GM12878 (cell line): ENCODE measurements at regions of chr1 and their contacts with region 1.

Region 1: DNA sequence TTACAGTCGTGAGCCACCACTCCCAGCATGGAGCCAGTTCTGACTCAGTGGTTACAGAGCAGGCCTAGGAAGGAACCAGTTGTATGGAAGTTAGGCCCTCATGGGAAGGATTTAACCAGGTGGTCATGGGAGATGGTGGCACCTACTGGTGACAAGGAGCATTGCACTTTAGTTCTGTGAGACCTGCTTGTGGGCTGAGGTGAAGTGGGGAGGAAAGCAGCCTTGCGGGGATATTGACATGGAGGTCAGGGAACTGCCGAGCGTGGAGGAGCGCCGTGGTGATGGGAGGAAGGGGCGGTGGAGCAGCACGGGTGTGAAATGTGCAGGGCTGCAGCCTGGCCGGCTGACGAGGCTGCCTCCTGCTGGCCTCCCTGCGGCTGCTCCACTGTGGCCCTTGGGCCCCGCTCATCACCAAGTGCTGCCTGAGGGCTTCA is 100.4 kb downstream of the GALNT2 start:
- DNase-seq: peak; percentile 54
- ATAC-seq: peak; percentile 74
- H3K4me3 ChIP-seq: no peak overlapping the region
- H3K27ac ChIP-seq: no peak overlapping the region
- H3K4me1 ChIP-seq: peaks cover 26% of the 10 kb centered on the region
- H3K27me3 ChIP-seq: no peaks in the 10 kb centered on the region
- CTCF ChIP-seq: peak; percentile 67 to 82 (median 79)
- EP300 ChIP-seq: no peak
- POLR2A ChIP-seq: no peak
- RAD21 ChIP-seq: peak; percentile 92

Region 2: GRCh38 chr1:229661022-229661877 is 506.2 kb before region 1 on chr1:
- CTCF ChIA-PET with region 1: interaction called, 20 read pairs
- POLR2A ChIA-PET with region 1: no interaction called
- RAD21 ChIA-PET with region 1: interaction called, 5 read pairs
- SMC1A ChIA-PET with region 1: interaction called, 3 read pairs
- in situ Hi-C with region 1: no loop called
- intact Hi-C with region 1: loop called (anchors 1 kb)
- DNase-seq: peak; percentile 31
- ATAC-seq: peak; percentile 91
- H3K4me3 ChIP-seq: no peak overlapping the region
- H3K27ac ChIP-seq: no peak overlapping the region
- H3K4me1 ChIP-seq: peaks cover 15% of the 10 kb centered on the region
- H3K27me3 ChIP-seq: no peaks in the 10 kb centered on the region
- CTCF ChIP-seq: peak; percentile 93 to 95 (median 93)
- EP300 ChIP-seq: no peak
- POLR2A ChIP-seq: no peak
- RAD21 ChIP-seq: peak; percentile 86

Region 3: DNA sequence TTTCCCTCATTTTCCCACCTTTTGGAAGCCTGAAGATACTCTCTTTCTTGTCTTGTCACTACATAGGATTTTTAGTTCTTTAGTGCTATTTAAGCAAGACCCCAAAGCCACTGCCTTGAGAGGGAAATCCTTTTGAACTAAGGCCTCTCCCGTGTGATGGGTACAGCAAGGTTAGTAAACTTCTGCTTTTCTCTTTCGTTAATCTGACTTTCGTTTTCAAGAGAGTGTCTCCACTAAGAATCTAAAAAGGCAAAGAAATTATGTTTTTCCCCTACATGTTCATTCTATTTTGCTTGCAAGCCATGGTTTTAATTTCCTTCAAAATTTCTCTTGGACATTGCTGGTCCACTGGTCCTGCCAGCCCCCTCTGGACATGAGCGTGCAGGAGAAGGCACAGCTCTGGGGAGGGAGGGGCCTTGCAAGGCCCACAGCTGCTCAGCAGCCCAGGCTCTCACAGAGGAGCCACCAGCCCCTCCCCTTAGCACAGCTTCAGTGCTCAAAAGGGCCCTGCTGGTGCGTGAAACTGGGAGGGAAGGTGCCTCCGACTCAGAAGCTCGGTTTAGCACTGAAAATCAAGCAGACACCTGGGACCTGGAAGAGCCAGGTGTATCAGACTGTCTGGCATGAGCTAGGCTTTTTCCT is 311.3 kb before region 1 on chr1:
- CTCF ChIA-PET with region 1: no interaction called
- POLR2A ChIA-PET with region 1: no interaction called
- RAD21 ChIA-PET with region 1: interaction called, 6 read pairs
- SMC1A ChIA-PET with region 1: interaction called, 8 read pairs
- in situ Hi-C with region 1: no loop called
- intact Hi-C with region 1: loop called (anchors 10 kb)
- DNase-seq: peak; percentile 57
- ATAC-seq: peak; percentile 98
- H3K4me3 ChIP-seq: peak overlapping the region; percentile 71
- H3K27ac ChIP-seq: peak overlapping the region; percentile 81
- H3K4me1 ChIP-seq: peaks cover 11% of the 10 kb centered on the region
- H3K27me3 ChIP-seq: no peaks in the 10 kb centered on the region
- CTCF ChIP-seq: no peak
- EP300 ChIP-seq: 0 out of 4 replicates have a peak, but pooled peaks of 1 of the 2 experiments have one; percentile 11
- POLR2A ChIP-seq: 0 out of 2 replicates have a peak, but pooled peaks have one; percentile 31
- RAD21 ChIP-seq: 0 out of 2 replicates have a peak, but pooled peaks have one; percentile 16

Region 4: GRCh38 chr1:230104395-230105244 is 62.8 kb before region 1 on chr1:
- CTCF ChIA-PET with region 1: interaction called, 25 read pairs
- POLR2A ChIA-PET with region 1: interaction called, 3 read pairs
- RAD21 ChIA-PET with region 1: interaction called, 11 read pairs
- SMC1A ChIA-PET with region 1: interaction called, 13 read pairs
- in situ Hi-C with region 1: no loop called
- intact Hi-C with region 1: no loop called
- DNase-seq: peak; percentile 69
- ATAC-seq: peak; percentile 84
- H3K4me3 ChIP-seq: 0 out of 2 replicates have a peak overlapping the region, but pooled peaks have one; percentile 3
- H3K27ac ChIP-seq: peak overlapping the region; percentile 63
- H3K4me1 ChIP-seq: peaks cover 53% of the 10 kb centered on the region
- H3K27me3 ChIP-seq: no peaks in the 10 kb centered on the region
- CTCF ChIP-seq: no peak
- EP300 ChIP-seq: peak in 1 of 2 experiments; percentile 16; a peak in 1 of 4 replicates
- POLR2A ChIP-seq: 0 out of 2 replicates have a peak, but pooled peaks have one; percentile 15
- RAD21 ChIP-seq: no peak

Region 5: GRCh38 chr1:230120926-230121381 is 46.5 kb before region 1 on chr1:
- CTCF ChIA-PET with region 1: interaction called, 44 read pairs
- POLR2A ChIA-PET with region 1: interaction called, 5 read pairs
- RAD21 ChIA-PET with region 1: interaction called, 30 read pairs
- SMC1A ChIA-PET with region 1: interaction called, 26 read pairs
- in situ Hi-C with region 1: no loop called
- intact Hi-C with region 1: loop called (anchors 1 kb)
- DNase-seq: no peak
- ATAC-seq: no peak
- H3K4me3 ChIP-seq: no peak overlapping the region
- H3K27ac ChIP-seq: 0 out of 2 replicates have a peak overlapping the region, but pooled peaks have one; percentile 2
- H3K4me1 ChIP-seq: peaks cover 50% of the 10 kb centered on the region
- H3K27me3 ChIP-seq: no peaks in the 10 kb centered on the region
- CTCF ChIP-seq: peak; percentile 39 to 74 (median 73); a peak in 5 of 6 replicates
- EP300 ChIP-seq: no peak
- POLR2A ChIP-seq: no peak
- RAD21 ChIP-seq: peak; percentile 50

Region 6: GRCh38 chr1:230149751-230150584 is 17.5 kb before region 1 on chr1:
- CTCF ChIA-PET with region 1: interaction called, 18 read pairs
- POLR2A ChIA-PET with region 1: interaction called, 5 read pairs
- RAD21 ChIA-PET with region 1: interaction called, 8 read pairs
- SMC1A ChIA-PET with region 1: interaction called, 15 read pairs
- in situ Hi-C with region 1: no loop called
- intact Hi-C with region 1: no loop called
- DNase-seq: peak; percentile 60
- ATAC-seq: peak; percentile 86
- H3K4me3 ChIP-seq: peak overlapping the region; percentile 53
- H3K27ac ChIP-seq: peak overlapping the region; percentile 68
- H3K4me1 ChIP-seq: peaks cover 40% of the 10 kb centered on the region
- H3K27me3 ChIP-seq: no peaks in the 10 kb centered on the region
- CTCF ChIP-seq: peak in 2 of 3 experiments; percentile 17 to 35; a peak in 3 of 6 replicates
- EP300 ChIP-seq: peak; percentile 57 to 70; a peak in 2 of 4 replicates
- POLR2A ChIP-seq: no peak
- RAD21 ChIP-seq: 0 out of 2 replicates have a peak, but pooled peaks have one; percentile 27